ENCODE measurements at regions of chr6 and their contacts with region 1.

Region 1: GRCh38 chr6:158475344-158476302 is 84.3 kb upstream of the TMEM181 start:
- DNase-seq: no peak
- H3K4me3 ChIP-seq: no peak overlapping the region
- H3K27ac ChIP-seq: no peak overlapping the region
- H3K4me1 ChIP-seq: peaks cover 0 to 4% (median 0%) of the 10 kb centered on the region in 4 experiments; a peak in 2 of 7 replicates
- H3K27me3 ChIP-seq: peaks cover 6 to 14% (median 12%) of the 10 kb centered on the region in 4 experiments
- CTCF ChIP-seq: no peak
- EP300 ChIP-seq: no peak
- POLR2A ChIP-seq: no peak
- RAD21 ChIP-seq: no peak

Region 2: DNA sequence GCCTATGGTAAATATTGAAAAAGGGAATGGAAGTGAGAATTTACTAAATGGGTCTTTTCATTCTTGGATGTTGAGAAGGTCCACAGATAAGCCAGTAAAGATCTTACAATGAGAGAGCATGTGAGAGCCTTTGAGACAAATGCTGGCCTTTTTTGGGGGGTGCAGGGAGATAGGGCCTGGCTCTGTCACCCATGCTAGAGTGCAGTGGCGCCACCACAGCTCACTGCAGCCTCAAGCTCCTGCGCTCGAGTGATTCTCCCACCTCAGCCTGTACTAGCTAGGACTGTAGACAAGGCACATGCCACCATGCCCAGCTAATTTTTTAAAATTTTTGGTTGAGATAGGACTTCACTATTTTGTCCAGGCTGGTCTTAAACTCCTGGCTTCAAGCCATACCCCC is 21.1 kb after region 1 on chr6:
- CTCF ChIA-PET with region 1: interaction called, 10 read pairs
- POLR2A ChIA-PET with region 1: interaction called, 3 read pairs
- DNase-seq: no peak
- H3K4me3 ChIP-seq: no peak overlapping the region
- H3K27ac ChIP-seq: no peak overlapping the region
- H3K4me1 ChIP-seq: no peaks in the 10 kb centered on the region
- H3K27me3 ChIP-seq: no peaks in the 10 kb centered on the region
- CTCF ChIP-seq: peak; percentile 42 to 66 (median 66); a peak in 3 of 4 replicates
- EP300 ChIP-seq: no peak
- POLR2A ChIP-seq: no peak
- RAD21 ChIP-seq: peak; percentile 59 to 60

Measured in H1 (cell line).